ENCODE measurements at regions of chr19 and their contacts with region 1.

Region 1: GRCh38 chr19:1020868-1021425 is at the start of gene TMEM259:
- DNase-seq: peak; percentile 92 to 99 (median 97)
- ATAC-seq: peak; percentile 94
- H3K4me3 ChIP-seq: peak within 1 kb of the TSS; percentile 79
- H3K4me3 Mint-ChIP-seq: peak within 1 kb of the TSS; percentile 85 to 98 (median 92)
- H3K27ac ChIP-seq: peak within 1 kb of the TSS; percentile 91
- H3K27ac Mint-ChIP-seq: peak within 1 kb of the TSS; percentile 99 to 100 (median 100)
- H3K4me1 ChIP-seq: peaks cover 26 to 44% of the 10 kb centered on the region in 2 donors
- H3K4me1 Mint-ChIP-seq: peaks cover 9 to 50% (median 33%) of the 10 kb centered on the region in 7 donors
- H3K27me3 ChIP-seq: no peaks in the 10 kb centered on the region
- H3K27me3 Mint-ChIP-seq: peaks cover 0 to 7% (median 0%) of the 10 kb centered on the region in 5 donors
- total RNA-seq, gene TMEM259: 189 to 347 (median 311) TPM

Region 2: DNA sequence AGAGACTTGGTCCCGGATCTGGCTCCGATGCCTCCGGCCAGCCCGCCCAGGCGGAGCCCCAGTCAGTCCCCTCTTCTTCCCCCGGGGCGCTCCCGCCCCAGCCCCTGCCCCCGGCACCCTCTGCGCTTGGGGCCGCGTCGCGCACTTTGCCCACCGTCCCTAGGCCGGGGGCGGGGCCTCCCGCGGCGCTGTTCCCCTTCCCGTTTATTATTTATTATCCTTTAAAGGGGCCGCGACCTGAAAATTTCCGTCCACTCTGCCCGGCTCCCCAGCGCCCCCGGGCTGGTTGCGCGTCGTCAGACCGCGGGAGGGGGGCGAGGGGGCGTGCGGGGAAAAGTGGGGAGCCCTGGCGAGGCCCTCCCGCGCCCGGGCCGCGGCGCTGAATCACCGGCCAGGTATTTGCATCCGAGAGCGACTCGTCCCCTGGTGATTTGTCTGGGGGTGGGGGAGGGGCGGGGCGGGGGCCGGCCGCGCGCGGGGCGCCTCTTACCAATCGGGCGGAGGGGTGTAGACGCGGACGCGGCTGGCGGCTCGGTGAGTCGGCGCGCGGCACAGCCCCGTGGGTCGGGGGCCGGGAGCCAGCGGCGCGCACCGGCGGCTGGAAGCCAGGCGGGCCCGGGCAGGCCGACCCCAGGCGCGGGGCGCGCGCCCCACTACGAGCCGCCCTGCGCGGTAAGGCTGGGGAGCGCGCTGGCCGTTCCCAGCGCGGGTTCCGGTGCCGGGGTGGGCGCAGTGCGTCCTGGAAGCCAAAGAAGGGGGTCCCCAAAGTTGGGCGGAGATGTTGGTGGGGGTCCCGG is 95.2 kb before region 1 on chr19 and contains the start of gene ARID3A:
- CTCF ChIA-PET with region 1: interaction called, 5 read pairs
- POLR2A ChIA-PET with region 1: interaction called, 3 read pairs
- intact Hi-C with region 1: loop called in 1 of 2 experiments (anchors 1 kb)
- DNase-seq: peak; percentile 59 to 83 (median 76)
- ATAC-seq: peak; percentile 83
- H3K4me3 ChIP-seq: peak within 1 kb of the TSS; percentile 79
- H3K4me3 Mint-ChIP-seq: peak within 1 kb of the TSS; percentile 63 to 88 (median 82)
- H3K27ac ChIP-seq: peak within 1 kb of the TSS; percentile 68
- H3K27ac Mint-ChIP-seq: peak within 1 kb of the TSS in 6 of 9 donors; percentile 14 to 80 (median 67)
- H3K4me1 ChIP-seq: peaks cover 0 to 4% of the 10 kb centered on the region in 2 donors
- H3K4me1 Mint-ChIP-seq: peaks cover 5 to 20% (median 13%) of the 10 kb centered on the region in 7 donors
- H3K27me3 ChIP-seq: no peaks in the 10 kb centered on the region
- H3K27me3 Mint-ChIP-seq: no peaks in the 10 kb centered on the region
- total RNA-seq, gene ARID3A: 7.1 to 33.1 (median 10.2) TPM

Region 3: GRCh38 chr19:1032264-1032867 is 11.4 kb after region 1 on chr19:
- CTCF ChIA-PET with region 1: interaction called, 6 read pairs
- POLR2A ChIA-PET with region 1: interaction called, 342 read pairs
- intact Hi-C with region 1: no loop called
- DNase-seq: no peak
- ATAC-seq: no peak
- H3K4me3 ChIP-seq: no peak overlapping the region
- H3K4me3 Mint-ChIP-seq: peak overlapping the region in 5 of 10 donors; percentile 29 to 73 (median 48)
- H3K27ac ChIP-seq: peak overlapping the region; percentile 35
- H3K27ac Mint-ChIP-seq: peak overlapping the region in 7 of 9 donors; percentile 17 to 96 (median 80)
- H3K4me1 ChIP-seq: peaks cover 30 to 34% of the 10 kb centered on the region in 2 donors
- H3K4me1 Mint-ChIP-seq: peaks cover 13 to 60% (median 41%) of the 10 kb centered on the region in 7 donors
- H3K27me3 ChIP-seq: no peaks in the 10 kb centered on the region
- H3K27me3 Mint-ChIP-seq: no peaks in the 10 kb centered on the region

Region 4: DNA sequence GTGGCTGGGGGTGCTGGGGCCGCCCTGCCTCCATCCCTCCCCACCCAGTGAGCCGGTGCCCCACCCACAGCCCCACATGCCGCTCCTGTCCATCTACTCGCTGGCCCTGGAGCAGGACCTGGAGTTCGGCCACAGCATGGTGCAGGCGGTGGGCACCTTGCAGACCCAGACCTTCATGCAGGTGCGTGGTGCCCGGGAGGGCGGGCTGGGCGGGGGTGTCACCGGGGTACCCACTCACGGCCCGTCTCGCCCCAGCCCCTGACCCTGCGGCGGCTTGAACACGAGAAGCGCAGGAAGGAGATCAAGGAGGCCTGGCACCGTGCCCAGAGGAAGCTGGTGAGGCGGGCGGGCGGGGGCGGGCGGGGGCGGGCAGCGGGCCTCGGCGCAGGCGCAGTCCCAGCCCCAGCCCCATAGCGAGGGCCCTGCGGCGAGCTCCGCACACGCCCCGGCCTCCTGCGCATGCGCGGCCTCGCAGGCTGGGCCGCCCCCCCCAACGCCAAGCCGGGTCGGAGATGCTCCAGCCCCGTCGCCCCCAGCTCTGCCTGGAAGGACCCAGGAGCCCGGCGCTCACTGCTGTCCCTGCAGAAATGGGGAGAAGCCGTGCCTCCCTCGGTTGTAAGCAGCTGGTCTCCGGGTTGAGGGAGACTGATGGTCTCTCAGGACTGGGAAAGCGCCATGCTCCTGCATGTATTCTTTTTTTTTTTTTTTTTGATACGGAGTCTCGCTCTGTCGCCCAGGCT is 53.8 kb after region 1 on chr19:
- CTCF ChIA-PET with region 1: interaction called, 5 read pairs
- POLR2A ChIA-PET with region 1: interaction called, 495 read pairs
- intact Hi-C with region 1: loop called in 1 of 2 experiments (anchors 1 kb)
- DNase-seq: peak; percentile 81 to 95 (median 93)
- ATAC-seq: peak; percentile 61
- H3K4me3 ChIP-seq: peak overlapping the region; percentile 68
- H3K4me3 Mint-ChIP-seq: peak overlapping the region; percentile 80 to 97 (median 89)
- H3K27ac ChIP-seq: peak overlapping the region; percentile 92
- H3K27ac Mint-ChIP-seq: peak overlapping the region; percentile 91 to 100 (median 99)
- H3K4me1 ChIP-seq: peaks cover 67 to 72% of the 10 kb centered on the region in 2 donors
- H3K4me1 Mint-ChIP-seq: peaks cover 27 to 53% (median 43%) of the 10 kb centered on the region in 7 donors
- H3K27me3 ChIP-seq: no peaks in the 10 kb centered on the region
- H3K27me3 Mint-ChIP-seq: no peaks in the 10 kb centered on the region

Region 5: DNA sequence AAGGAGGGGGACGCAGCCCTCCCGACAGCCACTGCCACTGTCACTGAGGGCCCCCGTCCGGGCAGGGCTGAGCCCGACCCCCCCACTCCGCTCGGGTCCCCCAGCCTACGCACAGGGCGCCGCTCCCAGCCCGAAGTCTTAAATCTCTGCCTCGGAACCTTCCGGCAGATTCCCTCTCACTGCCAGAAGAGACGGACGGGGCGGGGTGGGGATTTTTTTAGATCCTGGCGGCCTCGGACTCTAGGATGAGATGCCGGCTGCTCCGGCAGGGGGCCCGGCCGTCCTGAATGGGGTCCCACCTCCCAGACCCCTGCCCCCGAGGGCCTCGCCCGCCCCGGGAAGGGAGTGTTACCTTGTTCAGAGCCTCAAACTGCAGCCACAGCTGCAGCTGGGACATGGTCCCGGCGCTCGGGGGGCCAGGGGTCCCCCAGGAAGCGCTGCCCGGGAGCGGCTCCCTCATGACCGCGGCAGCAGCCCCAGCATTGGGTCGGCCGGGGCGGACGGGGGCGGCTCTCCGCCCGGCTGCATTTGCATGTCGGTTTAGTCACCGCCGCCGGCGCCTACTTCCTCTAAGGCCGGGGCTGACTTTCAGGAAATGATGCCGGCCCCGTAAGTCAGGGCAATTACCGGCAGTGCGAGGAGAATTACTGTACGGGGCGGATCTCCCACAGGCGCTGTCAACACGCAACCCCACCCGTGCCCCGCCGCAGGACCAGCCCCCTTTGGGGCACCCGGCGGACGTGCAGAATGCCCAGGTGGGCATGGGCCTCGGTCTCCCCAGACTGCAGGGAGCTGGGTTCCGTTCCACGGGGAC is 111.0 kb after region 1 on chr19:
- CTCF ChIA-PET with region 1: no interaction called
- POLR2A ChIA-PET with region 1: interaction called, 3 read pairs
- intact Hi-C with region 1: loop called in 1 of 2 experiments (anchors 1 kb)
- DNase-seq: peak; percentile 69 to 87 (median 85)
- ATAC-seq: peak; percentile 80
- H3K4me3 ChIP-seq: peak overlapping the region; percentile 81
- H3K4me3 Mint-ChIP-seq: peak overlapping the region; percentile 78 to 94 (median 85)
- H3K27ac ChIP-seq: peak overlapping the region; percentile 98
- H3K27ac Mint-ChIP-seq: peak overlapping the region; percentile 88 to 93 (median 92)
- H3K4me1 ChIP-seq: peaks cover 23 to 42% of the 10 kb centered on the region in 2 donors
- H3K4me1 Mint-ChIP-seq: peaks cover 13 to 45% (median 29%) of the 10 kb centered on the region in 7 donors
- H3K27me3 ChIP-seq: no peaks in the 10 kb centered on the region
- H3K27me3 Mint-ChIP-seq: no peaks in the 10 kb centered on the region

Region 6: DNA sequence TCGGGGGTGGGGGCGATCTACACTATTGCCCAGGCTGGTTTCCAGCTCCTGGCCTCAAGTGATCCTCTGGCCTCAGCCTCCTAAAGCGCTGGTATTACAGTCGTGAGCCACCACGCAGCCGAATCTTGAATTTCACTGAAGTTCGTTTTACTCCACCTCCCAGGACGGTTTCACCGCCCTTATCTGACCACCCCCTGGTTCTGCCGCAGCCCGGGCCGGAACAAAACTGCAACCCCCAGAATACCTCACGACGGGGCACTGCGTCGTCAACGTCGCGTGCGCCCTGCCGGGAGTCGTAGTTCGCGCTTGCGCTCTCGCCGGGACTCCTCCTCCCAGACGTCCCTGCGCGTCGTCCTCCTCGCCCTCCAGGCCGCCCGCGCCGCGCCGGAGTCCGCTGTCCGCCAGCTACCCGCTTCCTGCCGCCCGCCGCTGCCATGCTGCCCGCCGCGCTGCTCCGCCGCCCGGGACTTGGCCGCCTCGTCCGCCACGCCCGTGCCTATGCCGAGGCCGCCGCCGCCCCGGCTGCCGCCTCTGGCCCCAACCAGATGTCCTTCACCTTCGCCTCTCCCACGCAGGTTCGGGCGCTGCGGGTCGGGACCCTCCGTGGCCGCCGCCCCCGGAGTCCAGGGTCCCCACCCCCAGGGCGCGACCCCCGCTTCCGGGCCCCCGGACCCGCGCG is 220.6 kb after region 1 on chr19 and contains the start of gene ATP5F1D:
- CTCF ChIA-PET with region 1: no interaction called
- POLR2A ChIA-PET with region 1: no interaction called
- intact Hi-C with region 1: loop called (anchors 1 to 5 kb)
- DNase-seq: peak; percentile 76 to 91 (median 85)
- ATAC-seq: peak; percentile 74
- H3K4me3 ChIP-seq: peak within 1 kb of the TSS; percentile 57
- H3K4me3 Mint-ChIP-seq: peak within 1 kb of the TSS; percentile 86 to 96 (median 90)
- H3K27ac ChIP-seq: peak within 1 kb of the TSS; percentile 82
- H3K27ac Mint-ChIP-seq: peak within 1 kb of the TSS; percentile 81 to 96 (median 93)
- H3K4me1 ChIP-seq: peaks cover 29 to 33% of the 10 kb centered on the region in 2 donors
- H3K4me1 Mint-ChIP-seq: peaks cover 16 to 47% (median 25%) of the 10 kb centered on the region in 7 donors
- H3K27me3 ChIP-seq: no peaks in the 10 kb centered on the region
- H3K27me3 Mint-ChIP-seq: peaks cover 4 to 18% (median 9%) of the 10 kb centered on the region in 5 donors
- total RNA-seq, gene ATP5F1D: 90.6 to 178 (median 102) TPM

Region 7: GRCh38 chr19:1343041-1343440 is 322.1 kb after region 1 on chr19:
- CTCF ChIA-PET with region 1: no interaction called
- POLR2A ChIA-PET with region 1: no interaction called
- intact Hi-C with region 1: no loop called
- DNase-seq: no peak
- ATAC-seq: no peak
- H3K4me3 ChIP-seq: no peak overlapping the region
- H3K4me3 Mint-ChIP-seq: peak overlapping the region in 2 of 10 donors; percentile 2 to 31
- H3K27ac ChIP-seq: no peak overlapping the region
- H3K27ac Mint-ChIP-seq: peak overlapping the region in 1 of 9 donors; percentile 33
- H3K4me1 ChIP-seq: no peaks in the 10 kb centered on the region
- H3K4me1 Mint-ChIP-seq: peaks cover 4 to 11% (median 5%) of the 10 kb centered on the region in 7 donors
- H3K27me3 ChIP-seq: no peaks in the 10 kb centered on the region
- H3K27me3 Mint-ChIP-seq: peaks cover 0 to 3% (median 0%) of the 10 kb centered on the region in 5 donors

Measured in naive thymus-derived CD4-positive, alpha-beta T cell (primary cell).